AG04449 (cell line): ENCODE measurements at regions of chr21 and their contacts with region 1.

Region 1: DNA sequence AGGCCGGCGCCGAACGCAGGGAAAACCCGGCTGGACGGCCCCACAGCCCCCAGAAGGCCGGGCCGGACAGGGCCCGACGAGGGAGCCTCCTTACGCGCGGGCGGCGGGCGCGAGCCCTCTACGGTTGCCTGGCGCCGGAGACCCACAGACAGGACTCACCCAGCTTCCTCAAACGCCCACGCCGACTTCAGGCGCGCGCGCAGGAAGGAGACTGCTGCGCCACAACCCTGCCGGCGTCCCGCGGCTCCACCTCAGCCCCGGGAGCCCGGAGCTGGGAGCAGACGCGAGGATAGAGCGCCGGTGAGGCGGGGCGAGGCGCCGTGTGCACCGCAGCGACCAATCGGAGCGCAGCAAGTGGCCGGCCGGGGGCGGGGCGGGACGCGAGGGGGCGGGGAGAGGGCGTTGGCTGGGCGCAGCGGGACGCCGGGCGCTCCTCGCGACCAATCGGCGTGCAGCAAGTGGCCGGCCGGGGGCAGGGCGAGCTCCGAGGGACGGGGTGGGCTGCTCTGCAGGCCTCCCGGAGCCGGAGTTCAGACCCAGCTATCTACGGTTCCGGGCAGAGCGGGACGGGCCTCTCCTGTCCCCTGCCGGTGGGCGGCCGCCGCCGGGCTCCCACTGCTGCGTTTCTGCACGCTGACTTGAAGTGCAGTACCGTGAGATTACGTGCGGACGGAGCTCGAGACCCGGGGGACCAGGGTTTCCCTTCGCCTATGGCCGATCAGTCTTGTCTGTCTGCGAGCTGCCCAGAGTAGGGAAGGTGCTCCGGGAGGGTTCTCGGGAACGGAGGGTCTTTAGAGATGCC is at the start of gene TMEM50B:
- DNase-seq: peak; percentile 52
- H3K4me3 ChIP-seq: peak within 1 kb of the TSS; percentile 77
- CTCF ChIP-seq: peak; percentile 56

Region 2: GRCh38 chr21:33491373-33492102 is 11.7 kb after region 1 on chr21 and contains the start of gene DNAJC28:
- CTCF ChIA-PET with region 1: interaction called, 9 read pairs
- POLR2A ChIA-PET with region 1: interaction called, 24 read pairs
- DNase-seq: no peak
- H3K4me3 ChIP-seq: peak within 1 kb of the TSS; percentile 94
- CTCF ChIP-seq: no peak

Region 3: DNA sequence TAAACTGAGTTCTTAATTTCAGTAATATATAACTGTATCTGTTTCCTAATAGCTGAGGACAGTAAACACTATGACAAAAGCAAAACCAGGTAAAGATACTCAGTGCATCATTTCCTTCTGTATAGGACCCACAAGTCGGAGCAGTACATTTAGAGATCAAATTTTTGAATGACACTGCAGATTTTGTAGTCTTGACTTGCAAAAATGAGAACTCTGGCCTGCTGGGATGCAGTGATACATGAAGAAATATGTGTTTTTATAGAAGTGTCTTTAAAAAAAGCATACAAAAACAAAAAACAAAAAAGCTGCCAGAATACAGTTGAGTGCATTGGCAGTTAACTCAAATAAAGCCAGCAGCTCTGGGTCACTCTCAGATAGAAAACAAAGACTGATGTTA is 43.1 kb after region 1 on chr21:
- CTCF ChIA-PET with region 1: no interaction called
- POLR2A ChIA-PET with region 1: no interaction called
- DNase-seq: no peak
- H3K4me3 ChIP-seq: no peak overlapping the region
- CTCF ChIP-seq: no peak